K562 (cell line): ENCODE measurements at regions of chr4 and their contacts with region 1.

Region 1: DNA sequence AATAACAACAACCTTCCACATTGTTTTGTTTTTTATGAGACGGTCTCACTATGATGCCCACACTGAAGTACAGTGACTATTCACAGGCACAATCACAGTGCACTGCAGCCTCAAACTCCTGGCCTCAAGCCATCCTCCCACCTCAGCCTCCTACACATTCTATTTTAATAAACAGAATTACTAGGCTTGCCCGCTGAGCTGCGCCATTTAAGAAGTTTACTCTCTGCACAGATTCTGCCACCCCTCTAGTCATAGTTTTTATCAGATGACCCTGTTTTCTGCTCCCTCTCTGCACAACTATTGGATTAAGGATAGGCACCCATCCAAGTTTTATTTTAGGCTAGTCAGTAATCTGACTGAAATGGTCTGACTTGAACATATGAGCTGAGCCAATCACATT is 11.3 kb upstream of the COX18 start:
- DNase-seq: no peak
- ATAC-seq: no peak
- H3K4me3 ChIP-seq: no peak overlapping the region
- H3K27ac ChIP-seq: no peak overlapping the region
- H3K4me1 ChIP-seq: no peaks in the 10 kb centered on the region
- H3K27me3 ChIP-seq: no peaks in the 10 kb centered on the region
- CTCF ChIP-seq: no peak
- EP300 ChIP-seq: no peak
- POLR2A ChIP-seq: no peak
- RAD21 ChIP-seq: no peak

Region 2: DNA sequence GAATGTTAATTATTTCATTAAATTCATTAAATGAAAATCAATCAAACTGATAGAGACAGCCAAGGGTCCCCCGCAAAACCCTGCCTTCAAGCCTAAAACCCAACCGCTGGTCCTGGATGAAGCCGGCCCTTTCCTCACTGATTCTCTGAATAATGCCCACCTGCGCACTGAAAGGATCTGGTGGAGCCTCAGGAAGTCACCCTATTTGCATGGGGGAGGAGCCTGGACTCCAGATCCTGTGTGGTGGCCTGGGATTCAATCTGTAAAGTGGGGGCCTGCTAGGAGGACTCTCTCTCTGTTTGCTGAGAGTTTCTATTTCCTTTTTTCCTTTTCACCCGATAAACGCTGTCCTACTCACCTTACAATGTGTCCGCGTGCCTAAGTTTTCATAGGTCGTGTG is 413.9 kb before region 1 on chr4:
- CTCF ChIA-PET with region 1: no interaction called
- POLR2A ChIA-PET with region 1: no interaction called
- in situ Hi-C with region 1: no loop called
- intact Hi-C with region 1: no loop called
- DNase-seq: peak in 2 of 4 experiments; percentile 7 to 48
- ATAC-seq: peak; percentile 91
- H3K4me3 ChIP-seq: no peak overlapping the region
- H3K27ac ChIP-seq: no peak overlapping the region
- H3K4me1 ChIP-seq: no peaks in the 10 kb centered on the region
- H3K27me3 ChIP-seq: no peaks in the 10 kb centered on the region
- CTCF ChIP-seq: no peak
- EP300 ChIP-seq: no peak
- POLR2A ChIP-seq: no peak
- RAD21 ChIP-seq: no peak

Region 3: GRCh38 chr4:72919937-72920336 is 160.9 kb before region 1 on chr4:
- CTCF ChIA-PET with region 1: no interaction called
- POLR2A ChIA-PET with region 1: no interaction called
- in situ Hi-C with region 1: no loop called
- intact Hi-C with region 1: no loop called
- DNase-seq: no peak
- ATAC-seq: no peak
- H3K4me3 ChIP-seq: no peak overlapping the region
- H3K27ac ChIP-seq: no peak overlapping the region
- H3K4me1 ChIP-seq: no peaks in the 10 kb centered on the region
- H3K27me3 ChIP-seq: no peaks in the 10 kb centered on the region
- CTCF ChIP-seq: no peak
- EP300 ChIP-seq: no peak
- POLR2A ChIP-seq: no peak
- RAD21 ChIP-seq: no peak

Region 4: GRCh38 chr4:73069338-73070073 is 11.3 kb before region 1 on chr4 and contains the start of gene COX18:
- CTCF ChIA-PET with region 1: no interaction called
- POLR2A ChIA-PET with region 1: interaction called, 14 read pairs
- in situ Hi-C with region 1: no loop called
- intact Hi-C with region 1: no loop called
- DNase-seq: peak; percentile 93 to 99 (median 94)
- ATAC-seq: peak; percentile 92
- H3K4me3 ChIP-seq: peak within 1 kb of the TSS; percentile 65
- H3K27ac ChIP-seq: peak within 1 kb of the TSS; percentile 91
- H3K4me1 ChIP-seq: peaks cover 5 to 23% of the 10 kb centered on the region in 2 experiments; a peak in 4 of 5 replicates
- H3K27me3 ChIP-seq: no peaks in the 10 kb centered on the region
- CTCF ChIP-seq: peak in 1 of 3 experiments; percentile 13; a peak in 1 of 6 replicates
- EP300 ChIP-seq: peak; percentile 47; the same call in 1 of the 2 replicates
- POLR2A ChIP-seq: peak; percentile 94
- RAD21 ChIP-seq: no peak
- polyA plus RNA-seq, gene COX18: 7.0 to 7.2 TPM